PC-9 (cell line): ENCODE measurements at regions of chr11 and their contacts with region 1.

Region 1: DNA sequence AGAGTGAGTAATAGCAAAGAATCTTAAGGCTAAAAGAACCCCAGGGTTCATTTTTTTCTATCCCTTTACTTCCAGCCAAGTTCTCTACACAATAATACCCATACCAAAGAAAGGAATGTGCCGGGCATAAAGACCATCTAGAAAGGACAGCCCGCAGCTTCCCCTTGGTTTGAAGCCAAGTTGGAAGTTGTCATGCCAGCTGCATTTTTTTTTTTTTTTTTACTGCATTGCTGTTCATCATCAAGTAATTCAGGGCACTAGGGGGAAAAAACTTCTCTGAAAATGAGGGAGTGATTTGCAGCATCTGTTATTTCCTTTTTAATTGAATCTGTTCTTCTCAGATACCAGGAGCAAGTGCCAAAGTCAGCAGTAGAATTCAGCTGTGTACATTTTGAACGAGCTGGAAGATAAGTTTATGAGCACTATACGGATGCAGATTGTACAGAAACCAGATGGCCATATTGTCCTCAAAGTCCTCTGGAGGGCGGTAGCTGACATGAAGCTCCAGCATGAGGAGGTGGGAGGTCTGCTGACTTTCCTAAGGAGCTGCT is 56.4 kb downstream of the UBASH3B start:
- DNase-seq: peak; percentile 49 to 72
- H3K4me3 ChIP-seq: no peak overlapping the region
- H3K27ac ChIP-seq: no peak overlapping the region; the same call in 1 of the 2 replicates
- H3K4me1 ChIP-seq: peaks cover 32% of the 10 kb centered on the region
- H3K27me3 ChIP-seq: no peaks in the 10 kb centered on the region
- CTCF ChIP-seq: no peak

Region 2: GRCh38 chr11:122661182-122661945 is 50.5 kb before region 1 on chr11:
- CTCF ChIA-PET with region 1: no interaction called
- POLR2A ChIA-PET with region 1: no interaction called
- intact Hi-C with region 1: loop called (anchors 2 kb)
- DNase-seq: peak; percentile 64 to 100
- H3K4me3 ChIP-seq: peak overlapping the region; percentile 39; the same call in 1 of the 2 replicates
- H3K27ac ChIP-seq: peak overlapping the region; percentile 91
- H3K4me1 ChIP-seq: peaks cover 87% of the 10 kb centered on the region
- H3K27me3 ChIP-seq: no peaks in the 10 kb centered on the region
- CTCF ChIP-seq: no peak

Region 3: DNA sequence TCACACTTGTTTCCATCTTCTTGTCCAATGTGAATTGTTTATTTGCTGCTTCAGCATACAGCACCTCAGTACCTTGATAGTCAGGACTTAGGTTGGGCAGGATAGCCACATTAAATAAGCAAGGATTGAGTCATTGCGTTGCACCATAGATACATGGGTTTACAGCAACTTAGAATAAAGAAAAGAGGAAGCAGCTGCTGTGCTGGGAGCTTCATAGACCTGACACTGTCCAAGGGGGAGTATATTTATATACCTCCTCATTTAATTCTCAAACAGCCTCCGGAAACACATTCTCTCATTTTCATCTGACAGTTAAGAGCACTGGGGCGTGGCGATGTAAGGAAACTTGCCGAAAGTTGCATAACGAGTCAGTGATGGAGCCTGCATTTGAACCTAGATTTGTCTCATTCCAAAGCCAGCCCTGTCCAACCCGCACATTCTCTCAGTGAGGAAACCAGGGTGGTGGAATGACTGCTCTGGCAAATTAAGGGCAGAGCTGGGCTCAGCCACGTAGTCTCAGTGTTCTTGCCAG is 14.2 kb before region 1 on chr11:
- CTCF ChIA-PET with region 1: interaction called, 11 read pairs
- POLR2A ChIA-PET with region 1: no interaction called
- intact Hi-C with region 1: no loop called
- DNase-seq: peak; percentile 49 to 93
- H3K4me3 ChIP-seq: no peak overlapping the region
- H3K27ac ChIP-seq: peak overlapping the region; percentile 55
- H3K4me1 ChIP-seq: peaks cover 24% of the 10 kb centered on the region
- H3K27me3 ChIP-seq: no peaks in the 10 kb centered on the region
- CTCF ChIP-seq: no peak